Caco-2 (cell line): ENCODE measurements at regions of chr3 and their contacts with region 1.

Region 1: DNA sequence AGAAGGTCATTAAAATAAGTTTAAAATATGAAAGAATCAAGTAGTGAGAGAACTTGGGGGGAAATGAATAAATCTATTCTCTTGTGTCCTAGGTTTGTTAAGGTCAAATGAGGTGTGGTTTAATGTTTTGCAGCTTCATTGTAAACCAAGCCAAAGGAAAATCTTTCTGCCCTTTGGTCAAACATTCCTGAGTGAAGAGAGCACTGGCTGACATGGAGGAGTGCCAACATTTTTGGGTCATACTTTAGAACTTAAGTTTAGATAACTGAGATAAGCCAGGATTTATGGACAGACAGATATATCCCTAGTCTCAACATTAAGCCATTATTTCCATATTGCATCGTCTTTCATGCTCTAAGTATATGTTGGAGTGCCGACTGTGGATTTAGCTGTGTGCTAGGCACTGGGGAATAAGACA is 66.4 kb downstream of the PTPRG start:
- DNase-seq: peak; percentile 53 to 63
- H3K4me3 ChIP-seq: no peak overlapping the region
- H3K4me3 Mint-ChIP-seq: no peak overlapping the region
- H3K27ac Mint-ChIP-seq: peak overlapping the region; percentile 84
- H3K4me1 ChIP-seq: peaks cover 38% of the 10 kb centered on the region
- H3K4me1 Mint-ChIP-seq: peaks cover 41% of the 10 kb centered on the region
- H3K27me3 ChIP-seq: no peaks in the 10 kb centered on the region
- H3K27me3 Mint-ChIP-seq: no peaks in the 10 kb centered on the region
- CTCF ChIP-seq: no peak

Region 2: GRCh38 chr3:61612211-61613194 is 15.3 kb before region 1 on chr3:
- CTCF ChIA-PET with region 1: no interaction called
- POLR2A ChIA-PET with region 1: no interaction called
- intact Hi-C with region 1: loop called (anchors 1 kb)
- DNase-seq: peak; percentile 63 to 71
- H3K4me3 ChIP-seq: no peak overlapping the region
- H3K4me3 Mint-ChIP-seq: no peak overlapping the region
- H3K27ac Mint-ChIP-seq: peak overlapping the region; percentile 38
- H3K4me1 ChIP-seq: peaks cover 25% of the 10 kb centered on the region
- H3K4me1 Mint-ChIP-seq: peaks cover 18% of the 10 kb centered on the region
- H3K27me3 ChIP-seq: no peaks in the 10 kb centered on the region
- H3K27me3 Mint-ChIP-seq: no peaks in the 10 kb centered on the region
- CTCF ChIP-seq: no peak